PC-9 (cell line): ENCODE measurements at regions of chr11 and their contacts with region 1.

Region 1: DNA sequence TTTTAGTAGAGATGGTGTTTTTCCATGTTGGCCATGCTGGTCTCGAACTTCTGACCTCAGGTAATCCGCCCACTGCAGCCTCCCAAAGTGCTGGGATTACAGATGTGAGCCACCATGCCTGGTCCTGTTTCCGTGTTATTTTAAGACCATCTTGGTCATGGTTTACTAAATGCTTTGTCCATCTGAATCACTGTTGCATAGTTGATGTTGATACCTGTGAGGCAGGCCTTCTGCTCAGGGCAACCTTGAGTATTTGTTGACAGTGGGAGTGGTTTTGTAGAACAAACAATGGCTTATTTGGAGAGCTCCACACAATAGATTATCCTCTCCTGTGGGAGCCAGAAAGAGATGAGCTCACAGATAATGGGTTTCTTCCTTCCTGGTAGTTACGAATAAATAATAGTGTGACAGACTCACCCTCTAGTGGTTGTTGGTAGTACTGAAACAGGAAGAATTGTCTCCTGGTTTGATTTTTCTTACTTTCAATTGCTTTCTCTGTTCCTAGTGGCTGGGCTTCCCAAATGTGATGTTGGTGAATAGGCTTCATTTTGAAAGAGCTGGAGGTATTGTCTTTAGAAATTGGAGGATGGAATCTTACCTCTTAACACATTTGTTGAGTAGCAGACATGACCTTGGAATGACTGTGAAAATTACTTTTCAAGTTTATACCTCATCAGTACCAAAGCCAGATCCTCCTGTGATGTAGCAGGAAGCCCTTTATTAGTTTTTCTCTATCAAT is 39.0 kb downstream of the CTNND1 start:
- DNase-seq: peak; percentile 71 to 100
- H3K4me3 ChIP-seq: peak overlapping the region; percentile 3; the same call in 1 of the 2 replicates
- H3K27ac ChIP-seq: peak overlapping the region; percentile 94
- H3K4me1 ChIP-seq: peaks cover 35% of the 10 kb centered on the region
- H3K27me3 ChIP-seq: no peaks in the 10 kb centered on the region
- CTCF ChIP-seq: peak; percentile 98

Region 2: DNA sequence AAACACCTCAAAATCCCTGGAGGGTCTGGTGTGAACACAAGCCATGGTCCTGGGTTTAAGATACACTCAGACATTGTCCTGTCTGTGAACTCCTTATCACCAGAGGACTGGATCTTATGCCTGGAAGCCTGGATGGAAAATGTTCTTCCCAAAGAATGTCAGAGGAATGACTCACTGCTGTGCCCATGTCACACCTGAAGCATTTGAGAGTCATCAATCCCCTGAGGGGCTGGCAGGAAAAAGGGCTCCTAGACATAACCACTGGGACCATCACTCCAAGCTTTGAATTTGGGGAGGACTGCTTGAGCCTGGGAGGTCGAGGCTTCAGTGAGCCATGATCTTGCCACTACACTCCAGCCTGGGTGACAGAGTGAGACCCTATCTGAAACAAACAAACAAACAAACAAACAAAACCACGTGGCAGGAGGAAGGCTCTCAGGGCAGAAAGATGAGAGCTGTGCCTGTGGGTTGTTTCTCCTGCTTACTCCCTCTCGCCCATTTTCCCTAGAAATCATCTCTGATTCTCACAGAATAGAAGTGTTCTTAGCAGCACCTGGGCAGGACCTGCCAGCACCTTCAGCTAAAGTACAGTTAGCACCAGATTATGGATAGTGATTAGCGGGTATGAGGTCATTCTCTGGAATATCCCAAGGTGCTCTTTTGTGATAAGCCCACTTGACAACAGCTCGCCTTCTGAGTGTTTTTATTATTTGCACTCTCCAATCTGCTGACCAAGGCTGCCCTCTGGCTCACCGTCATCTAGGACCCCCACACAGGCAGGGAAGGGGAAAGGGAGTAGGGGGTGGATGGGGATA is 398.2 kb before region 1 on chr11:
- CTCF ChIA-PET with region 1: no interaction called
- POLR2A ChIA-PET with region 1: interaction called, 18 read pairs
- intact Hi-C with region 1: no loop called
- DNase-seq: peak; percentile 64 to 79
- H3K4me3 ChIP-seq: no peak overlapping the region
- H3K27ac ChIP-seq: peak overlapping the region; percentile 45
- H3K4me1 ChIP-seq: peaks cover 18% of the 10 kb centered on the region
- H3K27me3 ChIP-seq: 0 out of 2 replicates have a peak, but pooled peaks cover under 1% of the 10 kb centered on the region
- CTCF ChIP-seq: no peak

Region 3: GRCh38 chr11:57712256-57713150 is 88.1 kb before region 1 on chr11 and contains the start of gene TMX2:
- CTCF ChIA-PET with region 1: interaction called, 8 read pairs
- POLR2A ChIA-PET with region 1: interaction called, 25 read pairs
- intact Hi-C with region 1: loop called (anchors 1 kb)
- DNase-seq: peak; percentile 94 to 100
- H3K4me3 ChIP-seq: peak within 1 kb of the TSS; percentile 97
- H3K27ac ChIP-seq: peak within 1 kb of the TSS; percentile 75
- H3K4me1 ChIP-seq: peaks cover 25% of the 10 kb centered on the region
- H3K27me3 ChIP-seq: no peaks in the 10 kb centered on the region
- CTCF ChIP-seq: no peak
- total RNA-seq, gene TMX2: 124 and 138 TPM in 2 replicates

Region 4: DNA sequence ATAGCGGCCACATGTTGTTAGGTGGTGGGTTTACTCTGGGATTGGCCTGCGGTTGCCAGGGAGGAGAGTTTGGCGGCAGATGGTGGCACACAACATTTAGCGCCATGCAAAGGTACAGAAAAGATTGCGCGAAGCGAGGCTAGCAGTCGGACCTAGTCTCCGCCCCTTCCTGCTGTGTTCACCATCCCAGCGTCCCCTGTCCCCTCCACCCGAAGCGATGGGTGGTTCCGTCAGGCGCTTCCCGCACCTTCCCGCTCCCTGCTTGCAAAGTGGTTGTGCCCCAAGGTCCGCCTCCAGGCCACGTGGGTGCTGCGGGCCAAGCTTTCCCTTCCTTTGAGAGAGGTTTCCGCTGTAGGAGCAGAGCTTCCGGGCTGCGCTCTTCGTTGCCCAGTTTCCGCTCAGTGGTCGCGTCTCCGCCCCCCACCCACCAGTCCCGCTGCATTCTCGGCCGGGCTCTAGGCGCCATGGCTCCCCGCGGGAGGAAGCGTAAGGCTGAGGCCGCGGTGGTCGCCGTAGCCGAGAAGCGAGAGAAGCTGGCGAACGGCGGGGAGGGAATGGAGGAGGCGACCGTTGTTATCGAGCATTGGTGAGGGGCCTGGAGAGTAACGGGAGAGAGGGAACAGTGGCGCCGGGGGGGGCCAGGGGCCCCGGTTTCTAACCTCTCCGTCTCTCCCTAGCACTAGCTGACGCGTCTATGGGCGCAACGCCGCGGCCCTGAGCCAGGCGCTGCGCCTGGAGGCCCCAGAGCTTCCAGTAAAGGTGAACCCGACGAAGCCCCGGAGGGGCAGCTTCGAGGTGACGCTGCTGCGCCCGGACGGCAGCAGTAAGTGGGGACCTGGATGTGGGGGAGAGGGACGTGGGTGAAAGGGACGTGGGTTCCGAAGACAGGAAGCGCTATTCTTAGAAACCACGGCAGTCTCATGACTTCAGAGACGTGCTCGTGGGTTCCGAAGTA is 59.2 kb before region 1 on chr11 and contains the start of gene SELENOH:
- CTCF ChIA-PET with region 1: interaction called, 10 read pairs
- POLR2A ChIA-PET with region 1: interaction called, 11 read pairs
- intact Hi-C with region 1: loop called (anchors 1 kb)
- DNase-seq: peak; percentile 92 to 99
- H3K4me3 ChIP-seq: peak within 1 kb of the TSS; percentile 67
- H3K27ac ChIP-seq: peak within 1 kb of the TSS; percentile 64
- H3K4me1 ChIP-seq: peaks cover 14% of the 10 kb centered on the region
- H3K27me3 ChIP-seq: no peaks in the 10 kb centered on the region
- CTCF ChIP-seq: no peak
- total RNA-seq, gene SELENOH: 211 and 318 TPM in 2 replicates

Region 5: DNA sequence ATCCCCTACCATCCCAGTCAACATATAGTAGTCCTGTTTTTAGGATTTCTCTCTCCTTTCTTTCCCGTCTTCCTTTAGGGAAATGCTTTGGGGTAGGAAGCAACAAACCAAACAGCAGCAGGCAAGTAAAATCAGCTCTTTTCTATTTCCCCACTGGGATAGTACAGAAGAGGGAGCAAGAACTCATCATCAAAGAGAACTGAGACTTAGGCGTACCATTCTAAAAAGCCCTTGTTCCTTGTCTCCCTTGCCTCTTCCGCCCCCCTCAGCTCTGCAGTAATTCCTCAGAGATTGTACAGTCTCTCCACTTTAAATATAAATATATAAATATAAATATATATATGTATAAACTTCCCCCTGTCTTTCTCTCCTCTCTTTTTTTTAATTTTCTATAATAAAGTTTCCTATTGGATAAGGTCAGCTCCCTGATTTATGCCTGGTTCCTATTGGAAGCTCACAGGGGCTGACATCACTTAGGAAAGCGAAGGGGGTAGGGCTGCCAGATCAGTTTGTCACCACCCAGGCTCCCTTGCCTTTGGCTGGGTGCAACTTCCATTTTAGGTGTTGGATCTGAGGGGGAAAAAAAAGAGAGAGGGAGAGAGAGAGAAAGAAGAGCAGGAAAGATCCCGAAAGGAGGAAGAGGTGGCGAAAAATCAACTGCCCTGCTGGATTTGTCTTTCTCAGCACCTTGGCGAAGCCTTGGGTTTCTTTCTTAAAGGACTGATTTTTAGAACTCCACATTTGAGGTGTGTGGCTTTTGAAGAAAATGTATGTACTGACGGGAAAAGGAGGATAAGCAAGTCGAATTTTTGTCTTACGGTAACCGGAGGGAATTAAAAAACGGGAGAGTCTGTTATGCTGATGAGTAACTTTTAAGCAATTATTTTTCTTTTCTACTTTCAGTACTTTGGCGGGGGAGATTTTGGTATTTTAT is 39.0 kb before region 1 on chr11 and contains the start of gene CTNND1:
- CTCF ChIA-PET with region 1: interaction called, 25 read pairs
- POLR2A ChIA-PET with region 1: interaction called, 9 read pairs
- intact Hi-C with region 1: loop called (anchors 1 kb)
- DNase-seq: peak; percentile 92 to 96
- H3K4me3 ChIP-seq: peak within 1 kb of the TSS; percentile 100
- H3K27ac ChIP-seq: peak within 1 kb of the TSS; percentile 98
- H3K4me1 ChIP-seq: peaks cover 30% of the 10 kb centered on the region
- H3K27me3 ChIP-seq: no peaks in the 10 kb centered on the region
- CTCF ChIP-seq: no peak
- total RNA-seq, gene CTNND1: 340 and 413 TPM in 2 replicates

Region 6: GRCh38 chr11:57778318-57779037 is 22.1 kb before region 1 on chr11:
- CTCF ChIA-PET with region 1: interaction called, 10 read pairs
- POLR2A ChIA-PET with region 1: interaction called, 21 read pairs
- intact Hi-C with region 1: loop called (anchors 1 kb)
- DNase-seq: peak; percentile 98 to 99
- H3K4me3 ChIP-seq: peak overlapping the region; percentile 50; the same call in 1 of the 2 replicates
- H3K27ac ChIP-seq: peak overlapping the region; percentile 93
- H3K4me1 ChIP-seq: peaks cover 93% of the 10 kb centered on the region
- H3K27me3 ChIP-seq: no peaks in the 10 kb centered on the region
- CTCF ChIP-seq: no peak

Region 7: GRCh38 chr11:57815476-57815875 is 14.9 kb after region 1 on chr11:
- CTCF ChIA-PET with region 1: no interaction called
- POLR2A ChIA-PET with region 1: no interaction called
- intact Hi-C with region 1: no loop called
- DNase-seq: no peak
- H3K4me3 ChIP-seq: no peak overlapping the region
- H3K27ac ChIP-seq: no peak overlapping the region
- H3K4me1 ChIP-seq: no peaks in the 10 kb centered on the region
- H3K27me3 ChIP-seq: no peaks in the 10 kb centered on the region
- CTCF ChIP-seq: no peak

Region 8: GRCh38 chr11:59560702-59561469 is 1760.3 kb after region 1 on chr11:
- CTCF ChIA-PET with region 1: no interaction called
- POLR2A ChIA-PET with region 1: no interaction called
- intact Hi-C with region 1: loop called (anchors 2 kb)
- DNase-seq: peak; percentile 81 to 96
- H3K4me3 ChIP-seq: peak overlapping the region; percentile 79
- H3K27ac ChIP-seq: peak overlapping the region; percentile 84
- H3K4me1 ChIP-seq: peaks cover 22% of the 10 kb centered on the region
- H3K27me3 ChIP-seq: no peaks in the 10 kb centered on the region
- CTCF ChIP-seq: no peak